CD8-positive, alpha-beta T cell (primary cell): ENCODE measurements at regions of chr4 and their contacts with region 1.

Region 1: GRCh38 chr4:42627885-42628646 is 28.8 kb downstream of the ATP8A1 start:
- DNase-seq: peak; percentile 11 to 93 (median 62)
- ATAC-seq: peak; percentile 91
- H3K4me3 ChIP-seq: peak overlapping the region; percentile 3 to 9
- H3K4me3 Mint-ChIP-seq: peak overlapping the region; percentile 72
- H3K27ac ChIP-seq: peak overlapping the region; percentile 33 to 78
- H3K27ac Mint-ChIP-seq: peak overlapping the region; percentile 98
- H3K4me1 ChIP-seq: peaks cover 70% of the 10 kb centered on the region
- H3K4me1 Mint-ChIP-seq: peaks cover 81% of the 10 kb centered on the region
- H3K27me3 ChIP-seq: no peaks in the 10 kb centered on the region
- H3K27me3 Mint-ChIP-seq: no peaks in the 10 kb centered on the region
- CTCF ChIP-seq: no peak

Region 2: DNA sequence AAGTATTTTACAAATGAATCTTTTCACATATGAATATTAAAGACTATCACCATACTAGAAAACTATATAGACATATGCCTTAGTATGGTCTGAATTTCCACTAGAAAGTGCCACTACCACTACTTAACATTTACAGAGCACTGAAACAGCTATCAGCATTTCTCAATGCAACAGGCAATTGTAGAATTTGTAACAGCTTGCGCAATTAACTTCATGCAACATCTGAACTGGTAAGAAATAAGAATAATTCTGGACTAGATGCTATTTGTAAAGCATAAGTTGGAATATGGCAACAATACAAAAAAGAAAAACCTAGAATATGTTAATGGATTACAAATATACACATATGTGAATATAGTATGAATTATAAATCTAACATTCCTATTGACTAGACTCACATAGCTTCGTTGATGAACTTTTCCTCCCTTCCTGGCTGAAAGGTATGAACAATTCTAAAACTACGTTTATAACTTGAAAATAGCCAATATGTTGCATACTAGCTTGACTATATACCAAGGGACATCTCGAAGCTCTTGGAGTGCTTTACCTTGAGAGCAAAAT is 53.1 kb before region 1 on chr4:
- CTCF ChIA-PET with region 1: interaction called, 3 read pairs
- POLR2A ChIA-PET with region 1: no interaction called
- intact Hi-C with region 1: loop called in 1 of 2 experiments (anchors 5 kb)
- DNase-seq: no peak
- ATAC-seq: no peak
- H3K4me3 ChIP-seq: no peak overlapping the region
- H3K4me3 Mint-ChIP-seq: no peak overlapping the region
- H3K27ac ChIP-seq: no peak overlapping the region
- H3K27ac Mint-ChIP-seq: no peak overlapping the region
- H3K4me1 ChIP-seq: no peaks in the 10 kb centered on the region
- H3K4me1 Mint-ChIP-seq: peaks cover 4% of the 10 kb centered on the region
- H3K27me3 ChIP-seq: no peaks in the 10 kb centered on the region
- H3K27me3 Mint-ChIP-seq: no peaks in the 10 kb centered on the region
- CTCF ChIP-seq: no peak

Region 3: GRCh38 chr4:42643685-42644084 is 15.6 kb after region 1 on chr4:
- CTCF ChIA-PET with region 1: interaction called, 3 read pairs
- POLR2A ChIA-PET with region 1: interaction called, 7 read pairs
- intact Hi-C with region 1: loop called (anchors 1 to 2 kb)
- DNase-seq: peak in 2 of 9 experiments; percentile 44 to 66
- ATAC-seq: peak; percentile 37
- H3K4me3 ChIP-seq: no peak overlapping the region
- H3K4me3 Mint-ChIP-seq: peak overlapping the region; percentile 30
- H3K27ac ChIP-seq: peak overlapping the region in 1 of 2 experiments; percentile 47
- H3K27ac Mint-ChIP-seq: peak overlapping the region; percentile 16
- H3K4me1 ChIP-seq: peaks cover 93% of the 10 kb centered on the region
- H3K4me1 Mint-ChIP-seq: peaks cover 94% of the 10 kb centered on the region
- H3K27me3 ChIP-seq: no peaks in the 10 kb centered on the region
- H3K27me3 Mint-ChIP-seq: no peaks in the 10 kb centered on the region
- CTCF ChIP-seq: no peak

Region 4: GRCh38 chr4:42673082-42673425 is 45.0 kb after region 1 on chr4:
- CTCF ChIA-PET with region 1: interaction called, 3 read pairs
- POLR2A ChIA-PET with region 1: interaction called, 4 read pairs
- intact Hi-C with region 1: loop called in 1 of 2 experiments (anchors 5 kb)
- DNase-seq: peak in 6 of 9 experiments; percentile 26 to 57 (median 40)
- ATAC-seq: peak; percentile 45
- H3K4me3 ChIP-seq: no peak overlapping the region
- H3K4me3 Mint-ChIP-seq: peak overlapping the region; percentile 60
- H3K27ac ChIP-seq: peak overlapping the region; percentile 64 to 93
- H3K27ac Mint-ChIP-seq: peak overlapping the region; percentile 95
- H3K4me1 ChIP-seq: peaks cover 48% of the 10 kb centered on the region
- H3K4me1 Mint-ChIP-seq: peaks cover 56% of the 10 kb centered on the region
- H3K27me3 ChIP-seq: no peaks in the 10 kb centered on the region
- H3K27me3 Mint-ChIP-seq: no peaks in the 10 kb centered on the region
- CTCF ChIP-seq: no peak

Region 5: GRCh38 chr4:42729505-42730237 is 101.6 kb after region 1 on chr4:
- CTCF ChIA-PET with region 1: no interaction called
- POLR2A ChIA-PET with region 1: no interaction called
- intact Hi-C with region 1: no loop called
- DNase-seq: no peak
- ATAC-seq: no peak
- H3K4me3 ChIP-seq: no peak overlapping the region
- H3K4me3 Mint-ChIP-seq: no peak overlapping the region
- H3K27ac ChIP-seq: no peak overlapping the region
- H3K27ac Mint-ChIP-seq: no peak overlapping the region
- H3K4me1 ChIP-seq: no peaks in the 10 kb centered on the region
- H3K4me1 Mint-ChIP-seq: no peaks in the 10 kb centered on the region
- H3K27me3 ChIP-seq: no peaks in the 10 kb centered on the region
- H3K27me3 Mint-ChIP-seq: peaks cover 2% of the 10 kb centered on the region
- CTCF ChIP-seq: no peak